ENCODE measurements at regions of chr4 and their contacts with region 1.

Region 1: GRCh38 chr4:1167247-1167949 is 5.0 kb downstream of the SPON2 start:
- DNase-seq: peak; percentile 85 to 93 (median 86)
- ATAC-seq: peak; percentile 87
- H3K4me3 ChIP-seq: no peak overlapping the region
- H3K4me1 ChIP-seq: peaks cover 24% of the 10 kb centered on the region
- CTCF ChIP-seq: peak; percentile 85

Region 2: GRCh38 chr4:1260418-1261106 is 93.2 kb after region 1 on chr4:
- intact Hi-C with region 1: loop called (anchors 10 kb)
- DNase-seq: no peak
- ATAC-seq: no peak
- H3K4me3 ChIP-seq: no peak overlapping the region
- H3K4me1 ChIP-seq: no peaks in the 10 kb centered on the region
- CTCF ChIP-seq: no peak

Measured in mucosa of descending colon (tissue), 3 donors.